ENCODE measurements at regions of chr19 and their contacts with region 1.

Region 1: DNA sequence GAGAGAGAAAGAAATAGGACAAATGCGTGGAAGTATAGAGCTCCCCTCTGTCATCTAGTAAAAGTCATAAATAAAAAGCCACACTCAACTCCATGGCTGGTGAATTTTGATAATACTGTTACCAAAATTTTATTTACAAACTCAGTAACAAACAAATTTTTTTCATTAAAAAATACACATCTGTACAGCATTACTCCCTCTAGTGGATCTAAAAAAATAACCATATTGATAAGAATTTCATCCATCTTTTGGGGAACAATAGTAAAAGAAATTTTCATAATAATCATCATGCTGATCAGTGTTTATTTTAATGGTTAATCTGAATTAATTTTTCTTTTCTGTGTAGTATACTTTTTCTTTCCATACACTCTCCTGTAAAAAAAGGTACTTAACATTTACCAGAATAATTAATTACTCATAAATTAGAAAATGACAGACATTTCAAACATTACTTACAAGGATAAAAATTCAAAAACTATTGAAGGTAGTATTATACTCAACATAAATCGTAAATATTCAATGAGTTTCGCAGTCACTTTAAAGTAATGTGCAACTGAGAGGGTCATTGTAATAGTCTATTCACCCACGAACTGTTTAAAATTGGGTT is 173.5 kb upstream of the LSM14A start:
- DNase-seq: no peak

Region 2: GRCh38 chr19:33785795-33786194 is 213.0 kb before region 1 on chr19:
- intact Hi-C with region 1: loop called (anchors 10 kb)
- DNase-seq: no peak